ENCODE measurements at regions of chr17 and their contacts with region 1.

Region 1: GRCh38 chr17:41322094-41322902 is 6.8 kb upstream of the KRTAP17-1 start:
- DNase-seq: peak; percentile 46 to 68
- ATAC-seq: peak; percentile 67 to 79; a peak in 5 of 6 replicates
- H3K4me3 ChIP-seq: no peak overlapping the region
- H3K27ac ChIP-seq: 0 out of 6 replicates have a peak overlapping the region, but pooled peaks of 1 of the 2 experiments have one; percentile 43
- H3K4me1 ChIP-seq: no peaks in the 10 kb centered on the region
- CTCF ChIP-seq: peak; percentile 89
- EP300 ChIP-seq: no peak
- POLR2A ChIP-seq: no peak
- RAD21 ChIP-seq: peak; percentile 78 to 79

Region 2: GRCh38 chr17:40903129-40904065 is 418.9 kb before region 1 on chr17:
- CTCF ChIA-PET with region 1: interaction called, 32 read pairs
- POLR2A ChIA-PET with region 1: no interaction called
- DNase-seq: peak; percentile 94 to 96
- ATAC-seq: peak; percentile 86 to 91
- H3K4me3 ChIP-seq: peak overlapping the region; percentile 33
- H3K27ac ChIP-seq: peak overlapping the region; percentile 91 to 93
- H3K4me1 ChIP-seq: peaks cover 34% of the 10 kb centered on the region
- CTCF ChIP-seq: no peak
- EP300 ChIP-seq: peak; percentile 71 to 74; a peak in 4 of 5 replicates
- POLR2A ChIP-seq: no peak
- RAD21 ChIP-seq: peak; percentile 2 to 29; a peak in 1 of 5 replicates

Region 3: GRCh38 chr17:40915199-40915661 is 407.1 kb before region 1 on chr17:
- CTCF ChIA-PET with region 1: interaction called, 32 read pairs
- POLR2A ChIA-PET with region 1: no interaction called
- DNase-seq: peak; percentile 90 to 94
- ATAC-seq: peak; percentile 90 to 97
- H3K4me3 ChIP-seq: no peak overlapping the region
- H3K27ac ChIP-seq: peak overlapping the region; percentile 57 to 58; a peak in 5 of 6 replicates
- H3K4me1 ChIP-seq: peaks cover 30% of the 10 kb centered on the region
- CTCF ChIP-seq: no peak
- EP300 ChIP-seq: peak; percentile 66 to 77; a peak in 3 of 5 replicates
- POLR2A ChIP-seq: no peak
- RAD21 ChIP-seq: peak in 1 of 2 experiments; percentile 30; a peak in 1 of 5 replicates

Region 4: GRCh38 chr17:41301916-41302901 is 20.1 kb before region 1 on chr17 and contains the start of gene KRTAP29-1:
- CTCF ChIA-PET with region 1: interaction called, 23 read pairs
- POLR2A ChIA-PET with region 1: no interaction called
- DNase-seq: no peak
- ATAC-seq: peak in 1 of 2 experiments; percentile 22; a peak in 1 of 6 replicates
- H3K4me3 ChIP-seq: no peak within 1 kb of the TSS
- H3K27ac ChIP-seq: no peak within 1 kb of the TSS
- H3K4me1 ChIP-seq: no peaks in the 10 kb centered on the region
- CTCF ChIP-seq: no peak
- EP300 ChIP-seq: no peak
- POLR2A ChIP-seq: no peak
- RAD21 ChIP-seq: no peak
- polyA plus RNA-seq, gene KRTAP29-1: not detected in 2 replicates

Region 5: DNA sequence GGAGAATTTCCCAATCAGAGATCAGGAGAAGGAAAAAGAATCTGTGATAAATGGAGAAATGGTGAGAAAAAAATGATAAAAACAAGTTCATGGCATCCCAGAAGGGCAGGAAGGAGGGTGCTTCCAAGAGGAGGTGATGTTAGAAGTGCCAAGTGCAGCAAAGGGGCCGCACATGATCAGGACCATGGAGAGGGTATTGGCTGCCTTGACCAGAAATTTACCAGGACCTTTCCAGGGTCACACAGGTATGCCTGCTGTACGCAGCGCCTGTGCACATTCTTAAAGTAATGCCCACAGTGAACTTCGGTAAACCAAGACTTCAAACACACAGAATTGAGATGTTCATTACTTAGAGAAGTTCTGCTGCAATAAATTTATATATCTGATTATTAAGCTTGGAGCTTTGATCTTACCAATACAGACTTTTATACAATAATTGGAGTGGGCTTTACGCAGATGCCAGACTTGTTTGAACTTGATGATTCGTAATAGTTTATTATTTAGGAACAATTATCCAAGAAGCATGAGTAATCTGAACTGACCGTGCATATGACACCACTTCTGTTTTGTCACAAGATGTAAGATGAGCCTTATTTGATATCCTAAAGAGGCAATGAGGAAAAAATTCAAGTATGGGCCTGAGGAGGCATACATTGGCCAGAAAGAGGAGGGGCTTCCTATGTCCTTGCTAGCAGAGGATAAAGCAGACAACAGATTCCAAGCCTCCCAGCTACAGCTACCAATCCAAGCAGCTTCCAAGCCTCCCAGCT is 30.5 kb after region 1 on chr17:
- CTCF ChIA-PET with region 1: interaction called, 19 read pairs
- POLR2A ChIA-PET with region 1: no interaction called
- DNase-seq: no peak
- ATAC-seq: peak in 1 of 2 experiments; percentile 47; a peak in 1 of 6 replicates
- H3K4me3 ChIP-seq: no peak overlapping the region
- H3K27ac ChIP-seq: no peak overlapping the region
- H3K4me1 ChIP-seq: no peaks in the 10 kb centered on the region
- CTCF ChIP-seq: no peak
- EP300 ChIP-seq: no peak
- POLR2A ChIP-seq: no peak
- RAD21 ChIP-seq: no peak

Region 6: DNA sequence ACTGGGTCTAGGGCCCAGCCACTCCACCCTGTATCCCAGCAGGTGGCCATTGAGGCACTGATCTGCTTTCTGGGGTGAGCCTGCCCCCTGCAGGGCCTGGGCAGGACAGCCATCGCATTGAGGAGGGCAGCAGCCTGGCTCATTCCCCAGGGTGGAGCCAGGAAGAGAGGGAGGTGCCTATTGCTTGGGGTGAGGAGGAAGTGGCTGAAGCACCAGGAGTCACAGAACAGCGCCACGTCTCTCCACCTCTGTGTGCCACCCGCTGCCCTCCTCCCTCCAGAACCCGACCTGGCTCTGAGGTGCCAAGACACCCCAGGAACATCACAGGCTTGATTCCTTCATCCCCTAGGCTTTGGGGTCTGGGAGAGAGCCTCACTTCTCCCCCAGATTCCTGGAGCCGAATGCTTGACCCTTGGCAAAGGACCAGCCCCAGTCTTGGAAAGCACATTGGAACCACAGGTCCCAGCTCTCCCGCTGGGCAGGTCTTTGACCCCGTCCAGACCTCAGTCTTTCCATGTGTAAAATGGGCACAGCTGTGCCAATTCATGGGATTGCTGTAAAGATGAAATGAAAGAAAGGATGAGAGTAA is 174.6 kb after region 1 on chr17:
- CTCF ChIA-PET with region 1: interaction called, 12 read pairs
- POLR2A ChIA-PET with region 1: no interaction called
- DNase-seq: peak; percentile 91 to 95
- ATAC-seq: peak; percentile 91 to 99
- H3K4me3 ChIP-seq: no peak overlapping the region
- H3K27ac ChIP-seq: peak overlapping the region; percentile 76 to 88
- H3K4me1 ChIP-seq: peaks cover 27% of the 10 kb centered on the region
- CTCF ChIP-seq: peak; percentile 80
- EP300 ChIP-seq: no peak
- POLR2A ChIP-seq: peak; percentile 43
- RAD21 ChIP-seq: peak; percentile 89 to 92

Measured in A549 (cell line).